Activated CD8-positive, alpha-beta T cell treated with anti-CD3 and anti-CD28 coated beads for 36 hours (primary cell): ENCODE measurements at regions of chr1 and their contacts with region 1.

Region 1: DNA sequence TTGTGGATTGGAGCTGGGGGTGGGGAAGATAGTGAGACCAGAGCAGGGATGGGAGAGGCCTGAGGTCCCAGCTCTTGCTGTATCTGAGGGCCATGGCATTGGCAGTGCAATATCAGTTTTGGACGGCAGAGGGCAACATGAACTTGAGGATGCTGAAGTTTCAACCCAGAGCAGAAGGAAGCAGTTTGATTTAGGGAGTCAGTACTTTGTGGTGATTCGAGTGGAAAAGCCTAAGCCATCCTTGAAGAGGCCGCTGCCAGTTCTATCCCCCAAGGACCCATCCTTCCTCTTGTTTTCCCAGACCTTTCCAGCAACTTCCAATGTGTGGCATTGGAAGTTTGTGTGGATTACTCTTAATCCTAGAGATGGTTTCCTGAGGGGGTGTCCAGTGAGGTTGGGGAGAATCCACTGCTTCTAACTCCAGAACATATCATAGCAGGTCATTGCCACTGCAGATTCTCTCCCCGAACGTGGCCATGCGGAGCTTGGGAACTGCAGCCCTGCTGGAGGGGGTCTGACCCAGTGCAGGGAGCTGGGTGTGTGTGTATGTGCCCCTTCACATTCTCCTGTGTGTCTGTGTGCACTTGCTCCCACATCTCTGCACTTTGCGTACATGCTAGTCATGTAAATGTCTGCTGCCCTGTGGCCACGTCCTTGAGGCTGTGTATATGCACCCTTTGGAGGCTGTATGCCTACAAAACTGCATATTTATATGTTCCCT is 24.1 kb downstream of the SLC26A9 start:
- DNase-seq: peak; percentile 88
- ATAC-seq: peak; percentile 95
- H3K4me3 Mint-ChIP-seq: no peak overlapping the region
- H3K27ac Mint-ChIP-seq: no peak overlapping the region
- H3K4me1 Mint-ChIP-seq: no peaks in the 10 kb centered on the region
- H3K27me3 Mint-ChIP-seq: no peaks in the 10 kb centered on the region
- CTCF ChIP-seq: peak; percentile 84

Region 2: GRCh38 chr1:205907794-205908193 is 11.4 kb before region 1 on chr1:
- CTCF ChIA-PET with region 1: interaction called, 10 read pairs
- POLR2A ChIA-PET with region 1: no interaction called
- intact Hi-C with region 1: no loop called
- DNase-seq: no peak
- ATAC-seq: no peak
- H3K4me3 Mint-ChIP-seq: no peak overlapping the region
- H3K27ac Mint-ChIP-seq: no peak overlapping the region
- H3K4me1 Mint-ChIP-seq: no peaks in the 10 kb centered on the region
- H3K27me3 Mint-ChIP-seq: no peaks in the 10 kb centered on the region
- CTCF ChIP-seq: no peak